Colonic mucosa (tissue), 4 donors: ENCODE measurements at regions of chr5 and their contacts with region 1.

Region 1: GRCh38 chr5:159987031-159987674 is 21.8 kb upstream of the TTC1 start:
- DNase-seq: peak; percentile 84
- H3K4me3 ChIP-seq: peak overlapping the region; percentile 28
- H3K27ac ChIP-seq: no peak overlapping the region
- H3K4me1 ChIP-seq: no peaks in the 10 kb centered on the region
- H3K27me3 ChIP-seq: no peaks in the 10 kb centered on the region
- CTCF ChIP-seq: peak; percentile 70

Region 2: DNA sequence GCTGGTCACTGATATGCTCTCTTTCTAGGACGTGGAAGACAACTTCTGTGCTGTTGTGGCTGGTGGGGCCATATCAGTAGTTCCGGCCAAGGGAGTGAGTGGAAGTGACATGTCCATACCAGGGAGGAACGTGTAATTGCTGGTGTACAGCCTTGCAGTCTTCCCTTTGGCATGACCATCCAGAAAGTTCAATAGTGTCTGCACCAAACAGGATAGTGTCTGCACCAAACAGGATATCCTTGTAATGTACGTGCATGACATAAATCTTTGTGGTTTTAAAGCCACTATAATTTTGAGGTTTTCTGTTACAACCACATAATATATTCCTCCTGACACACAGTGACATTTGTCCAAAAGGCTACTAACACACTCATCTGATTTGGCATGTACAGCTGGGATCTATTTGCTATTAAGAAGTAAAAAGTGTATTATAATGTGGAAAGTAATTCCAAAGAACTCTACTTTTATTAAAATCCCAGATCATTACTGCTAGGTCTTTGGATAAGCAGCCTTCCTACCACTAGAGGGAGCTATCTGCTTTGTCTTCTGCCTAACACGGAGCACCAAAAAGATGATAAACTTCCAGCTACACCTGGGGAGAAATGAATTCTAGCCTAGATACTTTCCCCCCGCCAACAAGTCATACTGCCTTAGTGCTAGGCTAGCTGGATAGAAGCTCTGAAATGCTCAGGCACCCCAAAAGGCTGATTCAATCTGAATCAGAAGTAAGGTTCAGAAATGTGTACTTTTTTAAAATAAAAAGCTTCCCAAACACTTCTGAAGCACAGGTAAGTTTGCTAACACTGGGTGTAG is 830.5 kb before region 1 on chr5:
- intact Hi-C with region 1: loop called (anchors 10 kb)
- DNase-seq: peak; percentile 53
- H3K4me3 ChIP-seq: no peak overlapping the region
- H3K27ac ChIP-seq: no peak overlapping the region
- H3K4me1 ChIP-seq: no peaks in the 10 kb centered on the region
- H3K27me3 ChIP-seq: no peaks in the 10 kb centered on the region
- CTCF ChIP-seq: peak; percentile 87

Region 3: DNA sequence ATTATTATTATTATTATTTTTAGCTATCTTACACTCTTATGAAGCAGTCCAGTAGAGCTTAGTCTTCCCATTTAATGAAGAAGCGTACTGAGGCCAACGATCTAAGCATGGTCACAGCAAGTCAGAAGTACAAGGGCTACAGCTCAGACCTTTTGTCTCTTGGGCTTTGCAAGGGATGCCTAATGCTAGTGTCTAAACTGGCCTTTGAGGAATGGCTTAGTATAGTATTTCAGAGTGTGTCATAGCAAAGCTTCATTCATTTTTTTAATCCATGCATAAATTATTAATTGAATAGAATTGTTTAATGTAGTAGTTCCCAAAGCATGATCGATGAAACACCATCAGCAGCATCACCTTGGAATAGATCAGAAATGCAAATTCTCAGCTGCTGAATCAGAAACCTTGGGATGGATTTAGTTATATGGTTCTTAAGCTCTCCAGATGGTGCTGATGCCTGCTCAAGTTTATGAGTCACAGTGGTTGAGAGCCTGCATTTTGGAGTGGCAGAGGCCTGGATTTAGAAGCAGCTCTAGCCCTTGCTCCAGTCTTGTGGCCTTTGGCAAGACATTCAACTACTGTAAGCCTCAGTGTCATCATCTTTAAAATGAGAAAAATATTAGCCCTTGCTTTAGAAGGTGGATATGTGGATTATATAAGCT is 662.9 kb before region 1 on chr5:
- intact Hi-C with region 1: loop called (anchors 10 kb)
- DNase-seq: no peak
- H3K4me3 ChIP-seq: no peak overlapping the region
- H3K27ac ChIP-seq: no peak overlapping the region
- H3K4me1 ChIP-seq: no peaks in the 10 kb centered on the region
- H3K27me3 ChIP-seq: no peaks in the 10 kb centered on the region
- CTCF ChIP-seq: no peak

Region 4: GRCh38 chr5:159444441-159445082 is 542.6 kb before region 1 on chr5:
- intact Hi-C with region 1: loop called (anchors 5 kb)
- DNase-seq: no peak
- H3K4me3 ChIP-seq: no peak overlapping the region
- H3K27ac ChIP-seq: no peak overlapping the region
- H3K4me1 ChIP-seq: no peaks in the 10 kb centered on the region
- H3K27me3 ChIP-seq: no peaks in the 10 kb centered on the region
- CTCF ChIP-seq: no peak

Region 5: GRCh38 chr5:159515909-159516415 is 471.2 kb before region 1 on chr5:
- intact Hi-C with region 1: loop called (anchors 5 kb)
- DNase-seq: peak; percentile 57
- H3K4me3 ChIP-seq: no peak overlapping the region
- H3K27ac ChIP-seq: no peak overlapping the region
- H3K4me1 ChIP-seq: no peaks in the 10 kb centered on the region
- H3K27me3 ChIP-seq: no peaks in the 10 kb centered on the region
- CTCF ChIP-seq: peak; percentile 86

Region 6: GRCh38 chr5:159915904-159916840 is 71.0 kb before region 1 on chr5 and contains the start of gene ADRA1B:
- intact Hi-C with region 1: loop called (anchors 5 kb)
- DNase-seq: peak; percentile 60
- H3K4me3 ChIP-seq: peak within 1 kb of the TSS; percentile 31
- H3K27ac ChIP-seq: no peak within 1 kb of the TSS
- H3K4me1 ChIP-seq: no peaks in the 10 kb centered on the region
- H3K27me3 ChIP-seq: peaks cover 7% of the 10 kb centered on the region
- CTCF ChIP-seq: peak; percentile 32
- total RNA-seq, gene ADRA1B: 0.32 to 0.69 TPM

Region 7: DNA sequence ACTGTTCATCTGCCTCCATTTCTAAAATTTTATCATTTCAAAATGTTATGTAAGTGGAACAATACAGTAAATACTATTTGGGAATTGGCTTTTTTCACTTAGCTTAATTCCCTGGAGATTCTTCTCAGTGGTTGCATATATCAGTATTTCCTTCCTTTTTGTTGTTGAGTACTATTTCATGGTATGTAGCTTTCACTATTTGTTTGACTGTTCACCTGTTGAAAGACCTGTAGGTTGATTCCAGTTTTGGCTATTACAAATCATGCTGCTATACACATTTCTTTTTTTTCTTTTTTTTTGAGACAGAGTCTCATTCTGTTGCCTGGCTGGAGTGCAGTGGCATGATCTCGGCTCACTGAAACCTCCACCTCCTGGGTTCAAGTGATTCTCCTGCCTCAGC is 165.1 kb after region 1 on chr5:
- intact Hi-C with region 1: no loop called
- DNase-seq: no peak
- H3K4me3 ChIP-seq: no peak overlapping the region
- H3K27ac ChIP-seq: no peak overlapping the region
- H3K4me1 ChIP-seq: no peaks in the 10 kb centered on the region
- H3K27me3 ChIP-seq: no peaks in the 10 kb centered on the region
- CTCF ChIP-seq: no peak